ENCODE measurements at regions of chr11 and their contacts with region 1.

Region 1: GRCh38 chr11:925496-926321 is at the start of gene AP2A2:
- DNase-seq: peak; percentile 84 to 90
- ATAC-seq: peak; percentile 67 to 81
- H3K4me3 ChIP-seq: peak within 1 kb of the TSS; percentile 96
- H3K27ac ChIP-seq: peak within 1 kb of the TSS; percentile 98 to 99
- H3K4me1 ChIP-seq: peaks cover 13% of the 10 kb centered on the region
- CTCF ChIP-seq: peak; percentile 97
- EP300 ChIP-seq: no peak
- POLR2A ChIP-seq: peak; percentile 84
- RAD21 ChIP-seq: peak in 1 of 2 experiments; percentile 76; a peak in 4 of 5 replicates
- polyA plus RNA-seq, gene AP2A2: 60.4 and 72.6 TPM in 2 replicates

Region 2: DNA sequence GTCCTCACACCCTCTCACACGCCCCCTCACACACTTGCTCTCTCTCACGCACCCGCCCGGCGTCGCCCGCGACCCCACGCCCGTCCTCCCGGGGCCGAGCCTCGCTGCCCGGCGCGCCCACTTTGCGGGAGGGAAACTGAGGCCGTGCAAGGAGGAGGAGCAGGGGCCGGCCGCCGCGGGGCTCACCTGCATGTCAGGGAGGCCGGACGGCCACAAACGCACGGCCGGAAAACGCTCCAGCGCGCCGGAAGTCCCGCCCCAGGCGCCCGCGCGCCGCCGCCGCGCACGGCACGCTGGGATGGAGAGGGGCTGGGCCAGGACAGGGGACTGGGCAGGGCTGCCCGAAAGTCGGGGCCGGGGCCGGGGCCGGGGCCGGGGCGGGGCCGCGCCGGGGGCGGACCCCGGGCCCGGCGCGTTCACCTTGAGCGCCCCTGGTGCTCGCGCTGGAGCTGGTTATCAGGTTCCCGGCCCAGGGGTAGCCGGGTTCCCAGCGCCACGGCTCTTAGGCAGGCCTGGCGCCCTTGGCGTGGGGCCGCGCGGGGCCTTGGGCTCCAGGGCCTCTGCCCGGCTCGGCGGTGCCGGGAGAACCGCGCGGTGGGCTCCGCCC is 15.0 kb before region 1 on chr11 and contains the start of gene CHID1:
- CTCF ChIA-PET with region 1: interaction called, 26 read pairs
- POLR2A ChIA-PET with region 1: interaction called, 4 read pairs
- DNase-seq: peak; percentile 85 to 96
- ATAC-seq: peak; percentile 96 to 97
- H3K4me3 ChIP-seq: peak within 1 kb of the TSS; percentile 84
- H3K27ac ChIP-seq: peak within 1 kb of the TSS; percentile 96 to 98
- H3K4me1 ChIP-seq: peaks cover 14% of the 10 kb centered on the region
- CTCF ChIP-seq: no peak
- EP300 ChIP-seq: no peak
- POLR2A ChIP-seq: peak; percentile 43
- RAD21 ChIP-seq: no peak
- polyA plus RNA-seq, gene CHID1: 53.8 and 58.4 TPM in 2 replicates

Measured in A549 (cell line).